ENCODE measurements at regions of chr17 and their contacts with region 1.

Region 1: DNA sequence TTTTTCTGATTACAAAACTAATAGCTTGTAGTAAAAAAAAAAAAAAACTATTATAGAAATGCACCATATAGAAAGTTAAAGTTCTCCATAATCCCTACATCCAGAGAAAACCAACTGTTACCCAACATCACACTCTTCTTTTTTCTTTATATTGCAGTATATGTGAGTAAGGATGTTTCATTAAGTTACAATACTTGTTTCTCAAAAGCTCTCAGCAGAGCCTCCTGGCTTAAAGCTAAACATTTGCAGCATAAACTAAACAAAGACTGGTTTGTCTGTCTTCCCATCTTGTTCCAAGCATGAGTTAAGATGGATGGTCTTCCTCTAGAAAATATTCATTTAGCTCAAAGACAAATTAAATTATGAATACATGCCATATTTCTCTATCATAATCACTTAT is 25.2 kb downstream of the GRB2 start:
- DNase-seq: no peak
- ATAC-seq: no peak
- H3K4me3 ChIP-seq: no peak overlapping the region
- H3K27ac ChIP-seq: no peak overlapping the region
- H3K4me1 ChIP-seq: peaks cover 6% of the 10 kb centered on the region; the same call in 1 of the 2 replicates
- H3K27me3 ChIP-seq: no peaks in the 10 kb centered on the region
- CTCF ChIP-seq: no peak
- EP300 ChIP-seq: no peak
- POLR2A ChIP-seq: no peak
- RAD21 ChIP-seq: no peak

Region 2: DNA sequence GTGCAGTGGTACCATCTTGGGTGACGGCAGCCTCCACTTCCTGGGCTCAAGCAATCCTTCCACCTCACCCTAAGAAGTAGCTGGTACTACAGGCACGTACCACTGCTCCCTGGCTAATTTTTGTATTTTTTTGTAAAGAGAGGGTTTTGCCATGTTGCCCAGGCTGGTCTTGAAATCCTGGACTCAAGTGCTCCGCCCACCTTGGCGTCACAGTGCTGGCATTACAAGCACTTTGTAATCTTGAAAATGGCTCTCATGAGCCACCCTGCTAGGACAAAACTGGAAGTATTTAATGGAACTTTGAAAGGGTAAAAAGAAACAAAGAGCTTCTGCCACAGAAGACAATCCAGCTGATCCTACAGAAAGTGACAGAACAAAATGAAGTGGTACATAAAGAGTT is 206.8 kb before region 1 on chr17:
- CTCF ChIA-PET with region 1: no interaction called
- POLR2A ChIA-PET with region 1: no interaction called
- RAD21 ChIA-PET with region 1: no interaction called
- SMC1A ChIA-PET with region 1: no interaction called
- in situ Hi-C with region 1: no loop called
- intact Hi-C with region 1: no loop called
- DNase-seq: no peak
- ATAC-seq: no peak
- H3K4me3 ChIP-seq: no peak overlapping the region
- H3K27ac ChIP-seq: no peak overlapping the region
- H3K4me1 ChIP-seq: no peaks in the 10 kb centered on the region
- H3K27me3 ChIP-seq: no peaks in the 10 kb centered on the region
- CTCF ChIP-seq: no peak
- EP300 ChIP-seq: no peak
- POLR2A ChIP-seq: no peak
- RAD21 ChIP-seq: no peak

Region 3: GRCh38 chr17:75313941-75314551 is 66.3 kb before region 1 on chr17:
- CTCF ChIA-PET with region 1: no interaction called
- POLR2A ChIA-PET with region 1: interaction called, 12 read pairs
- RAD21 ChIA-PET with region 1: interaction called, 8 read pairs
- SMC1A ChIA-PET with region 1: interaction called, 33 read pairs
- in situ Hi-C with region 1: no loop called
- intact Hi-C with region 1: no loop called
- DNase-seq: no peak
- ATAC-seq: peak; percentile 79
- H3K4me3 ChIP-seq: no peak overlapping the region
- H3K27ac ChIP-seq: peak overlapping the region; percentile 87
- H3K4me1 ChIP-seq: peaks cover 67% of the 10 kb centered on the region
- H3K27me3 ChIP-seq: no peaks in the 10 kb centered on the region
- CTCF ChIP-seq: no peak
- EP300 ChIP-seq: 0 out of 4 replicates have a peak, but pooled peaks of 1 of the 2 experiments have one; percentile 36
- POLR2A ChIP-seq: no peak
- RAD21 ChIP-seq: no peak

Region 4: GRCh38 chr17:75325827-75326225 is 54.5 kb before region 1 on chr17:
- CTCF ChIA-PET with region 1: interaction called, 28 read pairs
- POLR2A ChIA-PET with region 1: interaction called, 10 read pairs
- RAD21 ChIA-PET with region 1: interaction called, 3 read pairs
- SMC1A ChIA-PET with region 1: interaction called, 33 read pairs
- in situ Hi-C with region 1: no loop called
- intact Hi-C with region 1: no loop called
- DNase-seq: no peak
- ATAC-seq: no peak
- H3K4me3 ChIP-seq: no peak overlapping the region
- H3K27ac ChIP-seq: peak overlapping the region; percentile 64
- H3K4me1 ChIP-seq: peaks cover 35% of the 10 kb centered on the region
- H3K27me3 ChIP-seq: no peaks in the 10 kb centered on the region
- CTCF ChIP-seq: no peak; a peak in 1 of 6 replicates
- EP300 ChIP-seq: no peak
- POLR2A ChIP-seq: no peak
- RAD21 ChIP-seq: peak; percentile 34; the same call in 1 of the 2 replicates

Region 5: GRCh38 chr17:75338335-75338734 is 42.0 kb before region 1 on chr17:
- CTCF ChIA-PET with region 1: interaction called, 13 read pairs
- POLR2A ChIA-PET with region 1: interaction called, 19 read pairs
- RAD21 ChIA-PET with region 1: interaction called, 9 read pairs
- SMC1A ChIA-PET with region 1: interaction called, 31 read pairs
- in situ Hi-C with region 1: no loop called
- intact Hi-C with region 1: no loop called
- DNase-seq: no peak
- ATAC-seq: peak; percentile 28
- H3K4me3 ChIP-seq: peak overlapping the region; percentile 40; the same call in 1 of the 2 replicates
- H3K27ac ChIP-seq: peak overlapping the region; percentile 36
- H3K4me1 ChIP-seq: peaks cover 44% of the 10 kb centered on the region
- H3K27me3 ChIP-seq: no peaks in the 10 kb centered on the region
- CTCF ChIP-seq: no peak
- EP300 ChIP-seq: no peak
- POLR2A ChIP-seq: no peak
- RAD21 ChIP-seq: no peak

Region 6: GRCh38 chr17:75364078-75364477 is 16.2 kb before region 1 on chr17:
- CTCF ChIA-PET with region 1: interaction called, 6 read pairs
- POLR2A ChIA-PET with region 1: interaction called, 7 read pairs
- RAD21 ChIA-PET with region 1: interaction called, 6 read pairs
- SMC1A ChIA-PET with region 1: interaction called, 49 read pairs
- in situ Hi-C with region 1: no loop called
- intact Hi-C with region 1: no loop called
- DNase-seq: no peak
- ATAC-seq: no peak
- H3K4me3 ChIP-seq: no peak overlapping the region
- H3K27ac ChIP-seq: peak overlapping the region; percentile 54; the same call in 1 of the 2 replicates
- H3K4me1 ChIP-seq: peaks cover 64% of the 10 kb centered on the region
- H3K27me3 ChIP-seq: no peaks in the 10 kb centered on the region
- CTCF ChIP-seq: no peak
- EP300 ChIP-seq: no peak
- POLR2A ChIP-seq: no peak
- RAD21 ChIP-seq: no peak

Region 7: GRCh38 chr17:75393523-75394331 is 13.4 kb after region 1 on chr17:
- CTCF ChIA-PET with region 1: interaction called, 30 read pairs
- POLR2A ChIA-PET with region 1: interaction called, 40 read pairs
- RAD21 ChIA-PET with region 1: interaction called, 18 read pairs
- SMC1A ChIA-PET with region 1: interaction called, 101 read pairs
- in situ Hi-C with region 1: no loop called
- intact Hi-C with region 1: no loop called
- DNase-seq: peak; percentile 79
- ATAC-seq: peak; percentile 95
- H3K4me3 ChIP-seq: peak overlapping the region; percentile 77
- H3K27ac ChIP-seq: peak overlapping the region; percentile 57
- H3K4me1 ChIP-seq: peaks cover 21% of the 10 kb centered on the region
- H3K27me3 ChIP-seq: no peaks in the 10 kb centered on the region
- CTCF ChIP-seq: 0 out of 6 replicates have a peak, but pooled peaks of 1 of the 3 experiments have one; percentile 3
- EP300 ChIP-seq: no peak
- POLR2A ChIP-seq: peak; percentile 51; the same call in 1 of the 2 replicates
- RAD21 ChIP-seq: no peak

Region 8: GRCh38 chr17:75400326-75400939 is 20.1 kb after region 1 on chr17:
- CTCF ChIA-PET with region 1: interaction called, 14 read pairs
- POLR2A ChIA-PET with region 1: interaction called, 40 read pairs
- RAD21 ChIA-PET with region 1: interaction called, 18 read pairs
- SMC1A ChIA-PET with region 1: interaction called, 101 read pairs
- in situ Hi-C with region 1: no loop called
- intact Hi-C with region 1: no loop called
- DNase-seq: no peak
- ATAC-seq: no peak
- H3K4me3 ChIP-seq: peak overlapping the region; percentile 52
- H3K27ac ChIP-seq: no peak overlapping the region
- H3K4me1 ChIP-seq: peaks cover 24% of the 10 kb centered on the region; the same call in 1 of the 2 replicates
- H3K27me3 ChIP-seq: no peaks in the 10 kb centered on the region
- CTCF ChIP-seq: no peak
- EP300 ChIP-seq: no peak
- POLR2A ChIP-seq: no peak
- RAD21 ChIP-seq: no peak

Region 9: GRCh38 chr17:75707131-75707571 is 326.8 kb after region 1 on chr17:
- CTCF ChIA-PET with region 1: no interaction called
- POLR2A ChIA-PET with region 1: no interaction called
- RAD21 ChIA-PET with region 1: no interaction called
- SMC1A ChIA-PET with region 1: no interaction called
- in situ Hi-C with region 1: no loop called
- intact Hi-C with region 1: no loop called
- DNase-seq: no peak
- ATAC-seq: no peak
- H3K4me3 ChIP-seq: no peak overlapping the region
- H3K27ac ChIP-seq: no peak overlapping the region
- H3K4me1 ChIP-seq: no peaks in the 10 kb centered on the region
- H3K27me3 ChIP-seq: no peaks in the 10 kb centered on the region
- CTCF ChIP-seq: no peak
- EP300 ChIP-seq: no peak
- POLR2A ChIP-seq: no peak
- RAD21 ChIP-seq: no peak

Measured in GM12878 (cell line).